ENCODE measurements at regions of chr6 and their contacts with region 1.

Region 1: GRCh38 chr6:107132330-107132954 is 17.1 kb upstream of the BEND3 start:
- DNase-seq: peak; percentile 19
- ATAC-seq: peak; percentile 50; the same call in 1 of the 2 replicates
- H3K4me3 ChIP-seq: no peak overlapping the region
- H3K27ac ChIP-seq: no peak overlapping the region
- H3K4me1 ChIP-seq: peaks cover 5 to 8% of the 10 kb centered on the region in 2 experiments; a peak in 3 of 4 replicates
- H3K27me3 ChIP-seq: no peaks in the 10 kb centered on the region
- CTCF ChIP-seq: peak; percentile 41 to 61 (median 49)
- POLR2A ChIP-seq: no peak
- RAD21 ChIP-seq: peak; percentile 67

Region 2: DNA sequence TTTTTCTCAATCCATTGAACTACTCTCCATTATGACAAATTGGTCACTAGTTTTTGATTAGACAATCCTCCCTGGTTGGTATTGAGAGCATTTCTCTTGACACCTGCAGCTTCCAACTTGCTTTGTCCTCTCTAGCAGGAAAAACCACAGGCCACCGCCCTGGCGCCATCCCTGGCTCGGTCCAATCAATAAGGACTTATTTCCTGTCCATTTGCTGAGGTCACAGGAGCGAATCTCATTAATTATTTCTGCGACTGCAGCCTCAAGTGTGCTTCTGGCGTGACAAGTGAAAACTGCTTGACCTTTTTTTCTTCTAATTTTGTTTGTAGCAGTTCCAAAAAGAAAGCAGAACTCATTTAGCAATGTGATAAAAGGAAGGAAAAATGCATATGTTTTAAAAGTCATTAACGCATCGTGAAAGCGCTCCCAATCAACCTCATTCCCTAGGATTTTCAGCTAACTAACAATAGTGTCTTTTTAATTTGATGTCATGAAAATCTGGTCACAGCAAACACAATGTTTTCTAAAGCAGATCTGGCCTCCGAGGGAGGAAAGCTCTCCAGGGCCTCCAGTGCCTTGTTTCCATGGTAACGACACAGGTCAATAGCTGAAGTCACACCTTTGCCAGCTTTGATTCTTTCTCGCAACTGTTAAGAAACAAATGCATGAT is 21.8 kb after region 1 on chr6:
- CTCF ChIA-PET with region 1: no interaction called
- POLR2A ChIA-PET with region 1: no interaction called
- RAD21 ChIA-PET with region 1: no interaction called
- intact Hi-C with region 1: no loop called
- DNase-seq: no peak
- ATAC-seq: no peak
- H3K4me3 ChIP-seq: no peak overlapping the region
- H3K27ac ChIP-seq: no peak overlapping the region
- H3K4me1 ChIP-seq: peaks cover 0 to 6% of the 10 kb centered on the region in 2 experiments; a peak in 1 of 4 replicates
- H3K27me3 ChIP-seq: no peaks in the 10 kb centered on the region
- CTCF ChIP-seq: no peak
- POLR2A ChIP-seq: no peak
- RAD21 ChIP-seq: no peak

Region 3: DNA sequence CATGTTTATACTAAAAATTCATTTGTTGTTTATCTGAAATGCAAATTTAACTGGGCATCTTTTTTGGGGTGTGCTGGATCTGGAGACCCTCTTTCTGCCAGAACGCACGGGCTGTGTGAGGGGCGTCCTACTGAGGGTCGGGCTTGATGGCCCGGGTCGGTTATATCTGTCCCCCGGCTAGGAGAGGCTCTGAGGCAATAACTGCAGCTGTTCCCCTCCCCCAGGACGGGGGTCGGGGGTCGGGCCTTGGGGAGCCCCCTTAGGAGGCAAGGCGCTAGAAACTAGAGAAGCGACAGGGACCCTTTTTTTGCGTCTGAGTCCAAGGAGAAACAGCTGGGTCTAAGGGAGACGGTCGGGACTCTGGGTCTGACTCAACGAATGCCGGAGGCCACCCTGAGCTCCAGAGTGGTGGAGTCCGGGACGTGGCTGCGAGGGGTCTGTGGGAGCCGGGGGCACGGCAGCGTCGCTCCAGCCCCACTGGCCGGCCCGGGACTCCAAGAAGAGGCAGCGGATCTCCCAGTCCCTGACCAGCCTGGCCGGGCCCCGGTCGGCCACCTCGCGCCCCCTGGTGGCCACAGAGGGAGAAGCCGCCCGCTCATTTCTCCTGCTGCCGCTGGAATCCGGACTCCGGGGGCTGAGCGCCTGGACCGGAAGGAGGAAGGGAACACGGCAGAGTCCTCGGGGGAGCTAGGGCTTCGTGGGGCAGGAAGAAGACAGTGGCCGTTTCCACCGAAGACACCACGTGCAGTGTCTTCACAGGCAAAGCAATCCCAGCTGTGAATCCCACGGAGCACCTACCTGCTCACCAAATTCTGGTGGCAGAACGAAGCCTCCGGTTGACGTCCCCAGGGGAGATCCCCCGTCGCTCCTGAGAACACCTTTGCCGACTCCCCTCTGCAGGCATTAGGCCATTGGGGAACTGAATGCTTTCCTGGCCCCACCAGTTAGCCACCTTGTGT is 715.7 kb after region 1 on chr6:
- CTCF ChIA-PET with region 1: interaction called, 3 read pairs
- POLR2A ChIA-PET with region 1: no interaction called
- RAD21 ChIA-PET with region 1: no interaction called
- intact Hi-C with region 1: loop called (anchors 1 kb)
- DNase-seq: peak; percentile 34
- ATAC-seq: peak; percentile 97
- H3K4me3 ChIP-seq: peak overlapping the region; percentile 33 to 48
- H3K27ac ChIP-seq: no peak overlapping the region
- H3K4me1 ChIP-seq: peaks cover 2 to 10% of the 10 kb centered on the region in 2 experiments; a peak in 1 of 4 replicates
- H3K27me3 ChIP-seq: no peaks in the 10 kb centered on the region
- CTCF ChIP-seq: peak; percentile 87 to 90 (median 90)
- POLR2A ChIP-seq: no peak
- RAD21 ChIP-seq: peak; percentile 86

Measured in HCT116 (cell line).